AG04450 (cell line): ENCODE measurements at regions of chr3 and their contacts with region 1.

Region 1: GRCh38 chr3:136390574-136390973 is 140.4 kb downstream of the PCCB start:
- DNase-seq: no peak
- H3K4me3 ChIP-seq: no peak overlapping the region
- H3K27ac ChIP-seq: no peak overlapping the region
- H3K27me3 ChIP-seq: no peaks in the 10 kb centered on the region
- CTCF ChIP-seq: no peak

Region 2: DNA sequence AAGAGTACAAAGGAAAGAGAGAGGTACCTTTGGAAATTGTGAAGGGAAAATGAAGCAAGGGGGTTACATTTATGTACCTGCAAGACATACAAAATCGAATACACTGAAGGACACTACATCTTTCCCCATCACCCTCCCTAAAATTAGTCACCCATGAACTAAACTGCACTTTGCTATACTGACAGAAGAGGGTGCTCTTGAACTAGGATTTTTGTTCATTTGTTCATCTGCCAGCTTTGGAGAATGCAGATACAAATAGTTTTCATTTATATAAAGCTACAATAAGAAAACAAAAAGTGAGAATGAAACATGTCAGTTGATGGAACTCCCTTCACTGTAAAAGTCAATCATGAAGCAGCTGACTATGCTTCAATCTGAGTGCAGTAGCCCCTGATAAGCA is 84.7 kb before region 1 on chr3:
- CTCF ChIA-PET with region 1: interaction called, 17 read pairs
- POLR2A ChIA-PET with region 1: no interaction called
- DNase-seq: peak; percentile 43
- H3K4me3 ChIP-seq: no peak overlapping the region
- H3K27ac ChIP-seq: no peak overlapping the region
- H3K27me3 ChIP-seq: no peaks in the 10 kb centered on the region
- CTCF ChIP-seq: peak; percentile 72

Region 3: DNA sequence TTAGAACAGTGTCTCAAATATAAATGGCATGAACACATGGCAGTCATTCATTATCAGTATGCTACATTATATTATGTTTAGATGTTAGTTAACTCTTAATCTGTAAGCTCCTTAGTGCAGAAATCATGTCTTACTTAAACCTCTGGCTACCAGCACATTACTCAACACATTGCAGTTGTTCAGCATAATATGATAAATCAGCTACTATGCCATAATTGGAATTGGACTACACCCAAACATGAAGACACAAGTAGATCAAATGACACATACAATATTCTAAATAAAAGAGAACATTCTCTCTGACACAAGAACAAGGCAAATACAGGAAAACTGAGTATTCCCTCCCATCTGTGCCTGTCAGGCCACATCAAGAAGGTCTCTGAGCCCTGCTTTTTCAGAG is 24.3 kb before region 1 on chr3:
- CTCF ChIA-PET with region 1: interaction called, 10 read pairs
- POLR2A ChIA-PET with region 1: interaction called, 8 read pairs
- DNase-seq: peak; percentile 10
- H3K4me3 ChIP-seq: no peak overlapping the region
- H3K27ac ChIP-seq: no peak overlapping the region
- H3K27me3 ChIP-seq: no peaks in the 10 kb centered on the region
- CTCF ChIP-seq: no peak

Region 4: GRCh38 chr3:136404056-136404455 is 13.5 kb after region 1 on chr3:
- CTCF ChIA-PET with region 1: interaction called, 12 read pairs
- POLR2A ChIA-PET with region 1: no interaction called
- DNase-seq: no peak
- H3K4me3 ChIP-seq: no peak overlapping the region
- H3K27ac ChIP-seq: no peak overlapping the region
- H3K27me3 ChIP-seq: no peaks in the 10 kb centered on the region
- CTCF ChIP-seq: no peak

Region 5: DNA sequence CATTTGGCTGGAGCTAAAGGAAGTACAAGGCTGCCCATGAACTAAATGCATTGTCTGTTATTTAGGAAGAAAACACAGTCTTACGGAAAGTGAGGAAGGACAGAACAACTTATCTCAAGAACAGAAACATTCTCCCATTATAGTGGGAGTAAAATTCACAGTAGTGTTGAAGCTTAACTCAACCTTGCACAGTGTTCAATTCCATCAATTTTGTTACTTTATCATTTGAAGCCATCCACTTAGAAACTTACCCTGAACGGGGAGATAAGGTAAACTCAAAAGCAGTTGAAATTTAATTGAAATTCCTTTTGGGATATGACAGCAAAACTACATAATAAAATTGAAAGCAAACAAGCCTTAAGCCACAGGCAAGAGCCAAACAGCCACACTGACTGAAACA is 46.5 kb after region 1 on chr3:
- CTCF ChIA-PET with region 1: interaction called, 10 read pairs
- POLR2A ChIA-PET with region 1: no interaction called
- DNase-seq: no peak
- H3K4me3 ChIP-seq: no peak overlapping the region
- H3K27ac ChIP-seq: no peak overlapping the region
- H3K27me3 ChIP-seq: no peaks in the 10 kb centered on the region
- CTCF ChIP-seq: no peak

Region 6: DNA sequence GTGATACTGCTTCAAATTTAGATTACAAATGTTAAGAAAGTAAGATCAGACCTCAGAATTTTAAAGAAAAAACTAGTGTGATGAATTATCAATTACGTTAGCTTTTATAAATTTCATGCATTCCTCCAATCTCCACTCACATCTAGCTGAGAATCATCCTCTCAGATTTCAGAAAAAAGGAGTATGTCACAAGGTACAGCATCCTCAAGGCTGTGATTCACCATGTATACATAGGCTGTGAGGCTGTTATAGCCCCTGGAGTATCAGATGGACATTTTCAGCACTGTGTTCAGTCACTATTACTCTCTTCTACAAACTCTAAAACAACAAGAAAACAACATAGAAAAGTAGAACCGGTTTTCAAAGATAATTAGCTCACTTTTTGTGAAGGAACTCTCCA is 73.9 kb after region 1 on chr3:
- CTCF ChIA-PET with region 1: interaction called, 10 read pairs
- POLR2A ChIA-PET with region 1: no interaction called
- DNase-seq: peak; percentile 75
- H3K4me3 ChIP-seq: no peak overlapping the region
- H3K27ac ChIP-seq: peak overlapping the region; percentile 92
- H3K27me3 ChIP-seq: no peaks in the 10 kb centered on the region
- CTCF ChIP-seq: no peak